ENCODE measurements at regions of chr11 and their contacts with region 1.

Region 1: GRCh38 chr11:19553683-19554333 is 158.8 kb upstream of the NAV2 start:
- DNase-seq: peak; percentile 43
- H3K4me3 Mint-ChIP-seq: no peak overlapping the region
- H3K27ac Mint-ChIP-seq: no peak overlapping the region
- H3K4me1 Mint-ChIP-seq: no peaks in the 10 kb centered on the region
- H3K27me3 Mint-ChIP-seq: peaks cover 5% of the 10 kb centered on the region

Region 2: DNA sequence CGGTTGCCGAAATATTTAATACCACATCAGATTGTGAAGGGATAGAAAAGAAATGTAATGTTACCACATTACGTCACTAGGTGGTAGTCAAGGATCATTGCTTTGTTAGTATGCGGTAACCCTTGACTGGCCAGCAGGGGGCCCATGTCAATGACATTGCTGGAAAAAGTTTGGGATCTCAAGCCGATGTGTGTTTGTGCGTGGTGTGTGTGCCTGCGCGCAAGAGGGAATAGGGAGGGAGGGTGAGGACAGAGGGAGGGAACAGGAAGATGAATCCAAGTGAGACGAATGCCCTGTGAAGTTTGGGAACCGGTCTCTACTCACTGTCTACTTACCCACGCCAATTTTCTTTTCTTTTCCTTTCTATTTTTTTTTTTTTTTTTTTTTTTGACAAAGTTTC is 482.6 kb before region 1 on chr11:
- intact Hi-C with region 1: loop called (anchors 1 kb)
- DNase-seq: peak; percentile 32
- H3K4me3 Mint-ChIP-seq: peak overlapping the region; percentile 48
- H3K27ac Mint-ChIP-seq: no peak overlapping the region
- H3K4me1 Mint-ChIP-seq: peaks cover 6% of the 10 kb centered on the region
- H3K27me3 Mint-ChIP-seq: peaks cover 18% of the 10 kb centered on the region

Region 3: GRCh38 chr11:19259487-19260345 is 294.1 kb before region 1 on chr11:
- intact Hi-C with region 1: loop called (anchors 1 kb)
- DNase-seq: peak; percentile 36
- H3K4me3 Mint-ChIP-seq: no peak overlapping the region
- H3K27ac Mint-ChIP-seq: no peak overlapping the region
- H3K4me1 Mint-ChIP-seq: peaks cover 4% of the 10 kb centered on the region
- H3K27me3 Mint-ChIP-seq: peaks cover 9% of the 10 kb centered on the region

Region 4: DNA sequence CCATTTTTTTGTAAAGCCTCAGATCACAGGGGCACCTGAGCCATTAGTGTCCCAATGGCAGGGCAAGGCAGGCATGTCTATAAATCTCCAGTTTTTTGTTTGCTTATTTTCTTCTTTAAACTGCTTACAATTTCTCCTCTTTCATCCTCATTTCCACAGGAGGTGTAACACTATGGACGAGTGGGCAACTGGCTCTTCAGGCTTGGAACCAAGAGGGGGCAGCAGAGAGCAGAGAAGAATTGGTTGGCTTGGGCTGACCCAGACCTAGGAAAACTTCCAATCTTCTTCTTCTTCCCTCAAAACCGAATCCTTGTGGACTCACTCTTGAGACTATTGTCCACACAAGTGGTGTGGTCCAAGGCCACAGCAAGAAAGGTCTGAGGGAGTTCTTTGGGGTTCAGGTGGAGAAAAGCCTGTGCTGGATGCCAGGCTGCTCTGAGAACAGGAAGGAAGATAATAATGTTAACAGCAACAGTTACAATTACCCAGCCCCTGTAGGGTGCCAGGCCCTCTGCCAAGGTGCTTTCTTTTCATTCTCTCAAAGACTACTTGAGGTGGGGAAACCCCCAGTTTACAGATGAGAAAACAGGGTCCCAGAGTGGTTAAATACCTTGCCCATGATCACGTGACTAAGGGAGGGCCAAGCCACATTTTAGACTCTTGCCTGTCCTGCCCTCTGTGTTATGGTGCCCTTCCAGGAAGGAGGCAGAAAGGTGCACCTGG is 242.3 kb before region 1 on chr11:
- intact Hi-C with region 1: loop called (anchors 1 kb)
- DNase-seq: peak; percentile 16
- H3K4me3 Mint-ChIP-seq: no peak overlapping the region
- H3K27ac Mint-ChIP-seq: no peak overlapping the region
- H3K4me1 Mint-ChIP-seq: no peaks in the 10 kb centered on the region
- H3K27me3 Mint-ChIP-seq: no peaks in the 10 kb centered on the region

Region 5: DNA sequence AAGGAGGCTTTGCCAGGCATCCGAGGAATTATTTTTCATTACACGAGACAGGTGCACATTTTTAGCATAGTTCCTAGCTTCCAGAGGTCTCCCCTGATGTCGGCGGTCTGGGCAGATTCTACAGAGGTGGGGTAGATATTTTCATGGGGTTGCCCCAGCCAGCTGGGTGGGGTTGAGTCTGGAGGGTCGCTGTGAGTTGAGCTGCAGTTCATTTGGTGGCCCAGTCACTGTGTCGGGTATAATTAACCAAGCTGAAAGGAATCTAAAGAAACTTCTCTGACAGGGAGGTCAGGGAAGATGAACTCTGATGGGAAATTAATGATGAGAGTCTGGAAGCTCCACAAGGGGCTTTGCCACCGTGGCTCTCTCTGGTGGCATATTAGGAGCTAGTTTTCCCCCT is 74.9 kb before region 1 on chr11:
- intact Hi-C with region 1: no loop called
- DNase-seq: no peak
- H3K4me3 Mint-ChIP-seq: no peak overlapping the region
- H3K27ac Mint-ChIP-seq: no peak overlapping the region
- H3K4me1 Mint-ChIP-seq: no peaks in the 10 kb centered on the region
- H3K27me3 Mint-ChIP-seq: no peaks in the 10 kb centered on the region

Region 6: DNA sequence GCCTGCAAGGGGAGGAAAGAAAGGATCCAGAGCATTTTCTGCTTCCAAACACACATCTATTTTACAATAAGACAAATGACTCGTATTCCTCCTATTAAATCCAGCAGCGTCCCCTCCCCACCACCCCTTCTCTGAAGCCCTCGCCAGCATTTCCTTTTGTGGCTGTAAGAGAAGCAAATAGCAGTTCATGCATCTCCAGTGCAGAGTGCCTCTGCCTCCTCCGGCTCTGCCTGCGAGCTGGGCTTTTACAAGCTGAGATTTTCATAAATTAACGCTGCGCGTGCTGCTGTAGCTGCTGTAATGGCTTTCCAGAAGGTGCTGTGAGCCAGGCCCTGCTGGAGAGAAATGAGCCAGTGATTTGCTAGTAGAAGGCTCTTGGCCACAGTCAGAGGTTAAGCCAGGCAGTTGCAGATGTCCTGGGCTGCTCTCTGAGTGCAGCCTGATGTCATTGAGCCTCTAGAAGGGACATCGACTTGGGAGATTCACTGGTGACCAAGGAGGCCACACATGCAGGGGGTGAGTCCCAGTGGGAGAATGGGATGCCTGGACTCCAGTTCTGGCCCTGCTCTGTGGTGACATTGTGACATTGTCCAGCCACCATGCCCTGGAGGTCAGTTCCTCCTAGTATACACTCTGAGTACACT is 24.3 kb after region 1 on chr11:
- intact Hi-C with region 1: no loop called
- DNase-seq: no peak
- H3K4me3 Mint-ChIP-seq: no peak overlapping the region
- H3K27ac Mint-ChIP-seq: no peak overlapping the region
- H3K4me1 Mint-ChIP-seq: no peaks in the 10 kb centered on the region
- H3K27me3 Mint-ChIP-seq: peaks cover under 1% of the 10 kb centered on the region

Region 7: DNA sequence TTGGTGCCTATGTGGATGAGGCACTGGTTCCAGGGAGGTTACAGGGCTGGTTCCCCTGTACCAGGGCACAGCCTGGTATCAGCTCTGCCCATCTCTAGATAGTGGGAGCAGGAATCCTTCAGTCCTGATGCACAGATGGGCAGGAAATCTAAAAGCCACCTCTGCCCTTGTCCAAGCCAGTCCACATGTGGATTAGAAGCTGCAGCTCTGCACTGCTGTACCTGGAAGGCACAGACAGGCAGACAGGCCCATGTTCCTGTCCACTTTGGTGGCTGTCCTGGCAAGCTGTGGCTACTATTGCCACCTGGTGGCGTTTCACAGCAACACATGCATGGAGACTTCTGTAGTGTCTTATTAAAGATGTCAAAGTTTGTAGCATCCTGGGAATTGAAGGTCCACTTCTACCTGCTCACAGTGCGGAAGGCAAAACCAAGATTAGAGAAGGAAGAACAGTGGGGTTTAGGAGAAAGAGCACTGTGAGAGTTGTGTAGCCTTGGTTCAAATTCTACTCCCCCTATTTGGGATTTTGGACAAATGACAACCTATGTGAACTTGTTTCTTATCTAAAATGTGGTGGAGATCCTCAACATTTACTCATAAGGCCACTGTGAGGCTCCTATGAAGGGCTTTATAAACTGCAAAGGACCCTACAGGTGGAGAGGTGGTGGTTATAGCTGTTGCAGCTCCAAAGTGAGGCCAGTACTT is 188.9 kb after region 1 on chr11:
- intact Hi-C with region 1: loop called (anchors 1 kb)
- DNase-seq: peak; percentile 43
- H3K4me3 Mint-ChIP-seq: no peak overlapping the region
- H3K27ac Mint-ChIP-seq: no peak overlapping the region
- H3K4me1 Mint-ChIP-seq: no peaks in the 10 kb centered on the region
- H3K27me3 Mint-ChIP-seq: peaks cover 5% of the 10 kb centered on the region

Region 8: DNA sequence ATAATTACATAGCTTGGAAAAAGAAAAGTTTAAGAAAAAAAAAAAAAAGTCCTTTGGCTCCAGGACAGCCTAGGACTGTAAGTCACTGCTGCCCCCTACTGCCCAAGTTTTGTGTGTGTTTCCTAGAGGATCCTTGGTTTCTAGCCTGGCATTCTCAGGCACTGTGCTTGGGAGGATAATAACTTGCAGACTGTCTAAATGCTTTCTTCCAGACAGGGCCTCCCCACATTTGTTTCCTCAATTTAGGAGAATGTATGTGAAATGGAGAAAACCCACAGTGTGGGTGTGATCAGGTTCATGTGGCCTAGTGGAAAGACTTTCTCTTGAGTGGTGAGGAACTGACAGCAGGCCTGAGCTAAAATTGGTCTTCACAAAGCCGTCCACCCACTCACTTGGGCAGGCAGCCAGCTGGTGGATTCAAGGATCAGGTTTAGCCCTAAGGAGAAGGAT is 349.8 kb after region 1 on chr11:
- intact Hi-C with region 1: loop called (anchors 1 kb)
- DNase-seq: no peak
- H3K4me3 Mint-ChIP-seq: no peak overlapping the region
- H3K27ac Mint-ChIP-seq: no peak overlapping the region
- H3K4me1 Mint-ChIP-seq: no peaks in the 10 kb centered on the region
- H3K27me3 Mint-ChIP-seq: no peaks in the 10 kb centered on the region